Breast epithelium (tissue), 4 donors: ENCODE measurements at regions of chr6 and their contacts with region 1.

Region 1: GRCh38 chr6:32796848-32797776 is 19.7 kb downstream of the HLA-DOB start:
- DNase-seq: peak; percentile 61 to 80
- H3K4me3 ChIP-seq: peak overlapping the region in 2 of 3 donors; percentile 33 to 56
- H3K27ac ChIP-seq: no peak overlapping the region
- H3K4me1 ChIP-seq: no peaks in the 10 kb centered on the region
- H3K27me3 ChIP-seq: peaks cover 0 to 7% of the 10 kb centered on the region in 2 donors
- CTCF ChIP-seq: peak; percentile 91 to 97 (median 92)
- POLR2A ChIP-seq: no peak

Region 2: GRCh38 chr6:32700391-32701040 is 96.6 kb before region 1 on chr6:
- intact Hi-C with region 1: loop called (anchors 10 kb)
- DNase-seq: peak in 1 of 2 donors; percentile 25
- H3K4me3 ChIP-seq: no peak overlapping the region
- H3K27ac ChIP-seq: no peak overlapping the region
- H3K4me1 ChIP-seq: no peaks in the 10 kb centered on the region
- H3K27me3 ChIP-seq: no peaks in the 10 kb centered on the region
- CTCF ChIP-seq: peak; percentile 13 to 67 (median 66)
- POLR2A ChIP-seq: no peak